ENCODE measurements at regions of chr1 and their contacts with region 1.

Region 1: DNA sequence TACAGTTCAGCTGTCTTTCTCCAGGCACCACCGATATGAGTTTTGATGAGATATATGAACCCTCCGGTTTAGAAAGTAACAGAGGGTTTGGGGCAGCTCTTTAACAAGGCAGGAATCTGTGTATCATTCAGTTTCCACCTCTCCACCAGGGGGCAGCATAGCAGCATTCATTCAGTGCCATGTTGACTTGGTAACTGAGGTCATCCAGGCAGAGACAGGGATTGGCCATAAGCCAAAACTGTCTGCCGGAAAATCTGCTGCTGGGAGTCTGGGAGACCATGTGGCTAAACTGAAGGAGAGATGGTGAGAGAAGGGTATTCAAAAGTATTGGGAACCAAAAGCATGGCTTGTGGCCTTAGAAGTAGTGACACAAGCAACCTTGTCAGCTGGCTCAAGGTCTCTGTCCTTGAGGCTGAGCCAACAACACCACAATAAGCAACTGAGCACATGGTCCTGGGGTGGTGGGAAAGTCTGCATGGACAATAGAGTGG is 98.5 kb downstream of the LMX1A start:
- DNase-seq: peak; percentile 87
- ATAC-seq: peak; percentile 92
- H3K4me3 Mint-ChIP-seq: no peak overlapping the region
- H3K27ac Mint-ChIP-seq: no peak overlapping the region
- H3K4me1 Mint-ChIP-seq: peaks cover 13% of the 10 kb centered on the region
- H3K27me3 Mint-ChIP-seq: peaks cover 30% of the 10 kb centered on the region
- CTCF ChIP-seq: peak; percentile 79

Region 2: DNA sequence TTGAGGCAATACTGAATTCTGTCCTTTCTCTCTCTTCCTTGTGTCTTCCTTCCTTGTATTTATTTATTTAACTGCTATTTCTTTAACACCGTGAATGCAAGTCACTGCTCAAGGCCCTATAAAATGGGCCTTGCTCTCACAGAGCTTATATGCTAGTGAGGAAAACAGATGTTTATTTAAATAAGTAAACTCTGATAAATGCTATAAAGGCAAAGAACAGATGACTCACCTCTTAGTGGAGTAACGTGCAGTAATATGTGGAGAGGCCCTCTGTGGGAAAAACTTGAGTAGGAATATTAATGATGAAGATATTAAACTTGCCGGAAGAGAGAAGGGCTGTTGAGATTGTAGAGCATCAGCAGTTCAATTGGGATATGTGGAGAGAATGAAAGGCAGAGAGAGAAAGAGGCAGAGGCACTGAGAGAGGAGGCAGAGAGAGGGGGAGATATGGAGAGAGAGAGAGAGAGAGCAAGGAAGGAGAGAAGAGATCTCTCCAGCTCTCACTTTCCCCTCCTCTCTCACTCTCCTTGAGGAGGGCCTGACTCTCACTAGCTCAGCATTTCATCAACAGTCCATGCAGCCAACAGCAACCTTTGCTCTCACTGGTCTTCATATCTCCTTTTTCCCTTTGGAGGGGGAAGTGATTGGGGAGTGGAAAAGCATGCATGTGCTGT is 223.7 kb before region 1 on chr1:
- CTCF ChIA-PET with region 1: no interaction called
- POLR2A ChIA-PET with region 1: no interaction called
- DNase-seq: no peak
- ATAC-seq: no peak
- H3K4me3 Mint-ChIP-seq: no peak overlapping the region
- H3K27ac Mint-ChIP-seq: no peak overlapping the region
- H3K4me1 Mint-ChIP-seq: peaks cover 14% of the 10 kb centered on the region
- H3K27me3 Mint-ChIP-seq: no peaks in the 10 kb centered on the region
- CTCF ChIP-seq: no peak

Region 3: DNA sequence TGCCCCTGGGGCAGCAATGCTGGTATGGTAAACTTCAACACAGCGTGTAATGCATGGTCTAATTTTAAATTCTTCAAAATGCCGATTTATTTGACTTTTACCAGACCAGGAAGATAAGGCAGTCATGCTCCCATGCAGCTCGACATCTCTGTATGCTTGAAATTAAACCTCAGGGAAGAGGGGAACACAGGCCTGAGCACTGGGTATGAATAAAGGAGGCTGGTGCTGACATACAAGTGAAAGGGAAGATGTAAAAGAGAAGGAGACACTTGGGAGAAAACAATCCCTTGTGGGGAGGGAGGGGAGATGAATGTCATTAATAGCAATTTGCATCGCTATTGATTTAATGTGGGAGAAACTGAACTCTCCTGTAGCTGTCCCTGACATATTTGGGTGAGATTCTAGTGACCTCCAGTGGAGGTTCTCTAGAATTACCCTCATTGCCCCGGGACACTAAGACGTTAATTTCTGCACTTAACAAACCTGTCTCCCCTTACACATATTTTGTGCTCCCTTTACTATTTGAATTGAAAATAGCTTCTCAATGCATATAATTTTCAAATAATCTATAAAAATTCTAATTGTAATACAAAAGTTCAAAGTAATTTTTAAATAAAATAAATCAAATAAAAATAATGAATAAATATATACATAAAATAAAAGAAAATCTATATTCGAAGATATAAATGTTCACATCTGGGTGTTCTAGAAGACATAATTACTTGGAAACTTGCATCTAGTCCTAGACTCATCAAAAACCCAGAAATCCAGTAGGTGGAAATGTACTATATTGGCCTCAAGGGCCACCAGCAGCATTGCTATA is 184.6 kb before region 1 on chr1:
- CTCF ChIA-PET with region 1: no interaction called
- POLR2A ChIA-PET with region 1: no interaction called
- DNase-seq: no peak
- ATAC-seq: peak; percentile 81
- H3K4me3 Mint-ChIP-seq: no peak overlapping the region
- H3K27ac Mint-ChIP-seq: no peak overlapping the region
- H3K4me1 Mint-ChIP-seq: peaks cover 29% of the 10 kb centered on the region
- H3K27me3 Mint-ChIP-seq: no peaks in the 10 kb centered on the region
- CTCF ChIP-seq: peak; percentile 55

Region 4: GRCh38 chr1:165228676-165229075 is 29.3 kb before region 1 on chr1:
- CTCF ChIA-PET with region 1: interaction called, 14 read pairs
- POLR2A ChIA-PET with region 1: no interaction called
- DNase-seq: peak; percentile 41
- ATAC-seq: peak; percentile 72
- H3K4me3 Mint-ChIP-seq: no peak overlapping the region
- H3K27ac Mint-ChIP-seq: no peak overlapping the region
- H3K4me1 Mint-ChIP-seq: peaks cover 25% of the 10 kb centered on the region
- H3K27me3 Mint-ChIP-seq: peaks cover 23% of the 10 kb centered on the region
- CTCF ChIP-seq: no peak

Region 5: GRCh38 chr1:165290148-165290547 is 32.1 kb after region 1 on chr1:
- CTCF ChIA-PET with region 1: interaction called, 17 read pairs
- POLR2A ChIA-PET with region 1: no interaction called
- DNase-seq: no peak
- ATAC-seq: no peak
- H3K4me3 Mint-ChIP-seq: no peak overlapping the region
- H3K27ac Mint-ChIP-seq: no peak overlapping the region
- H3K4me1 Mint-ChIP-seq: peaks cover 16% of the 10 kb centered on the region
- H3K27me3 Mint-ChIP-seq: no peaks in the 10 kb centered on the region; the same call in 1 of the 2 replicates
- CTCF ChIP-seq: no peak

Region 6: GRCh38 chr1:165355977-165356811 is 98.2 kb after region 1 on chr1 and contains the start of gene LMX1A:
- CTCF ChIA-PET with region 1: interaction called, 13 read pairs
- POLR2A ChIA-PET with region 1: no interaction called
- DNase-seq: peak; percentile 53
- ATAC-seq: peak; percentile 11
- H3K4me3 Mint-ChIP-seq: peak within 1 kb of the TSS; percentile 74
- H3K27ac Mint-ChIP-seq: no peak within 1 kb of the TSS
- H3K4me1 Mint-ChIP-seq: peaks cover 47% of the 10 kb centered on the region
- H3K27me3 Mint-ChIP-seq: peaks cover 96% of the 10 kb centered on the region
- CTCF ChIP-seq: no peak
- total RNA-seq, gene LMX1A: not detected in 3 replicates

Measured in WTC11 (cell line).